ENCODE measurements at regions of chr12 and their contacts with region 1.

Region 1: GRCh38 chr12:109844983-109845823 is 12.0 kb upstream of the TRPV4 start:
- DNase-seq: peak; percentile 85 to 87 (median 86)
- H3K4me3 ChIP-seq: peak overlapping the region in 5 of 7 experiments; percentile 29 to 50 (median 34)
- H3K27ac ChIP-seq: no peak overlapping the region
- H3K4me1 ChIP-seq: peaks cover 1 to 8% (median 4%) of the 10 kb centered on the region in 4 experiments
- H3K27me3 ChIP-seq: no peaks in the 10 kb centered on the region

Region 2: DNA sequence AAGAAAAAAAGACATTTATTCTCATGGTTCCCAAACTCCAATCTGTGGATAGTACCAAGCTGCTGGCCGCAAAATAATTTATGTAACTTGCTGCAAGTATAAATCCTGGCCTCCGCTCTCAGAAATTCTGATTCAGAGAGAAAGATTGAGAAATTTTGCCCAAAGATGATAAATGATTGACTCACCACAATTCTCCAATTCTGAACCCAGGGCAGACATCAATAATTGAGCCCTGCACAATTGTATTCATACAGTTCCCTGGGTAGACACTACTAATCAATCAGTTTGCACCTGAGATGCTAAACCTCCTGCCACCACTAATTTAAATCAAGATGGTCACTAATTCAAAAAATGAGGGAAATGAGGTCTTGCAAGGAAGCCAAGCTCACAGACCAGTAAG is 50.2 kb before region 1 on chr12:
- CTCF ChIA-PET with region 1: no interaction called
- POLR2A ChIA-PET with region 1: no interaction called
- DNase-seq: no peak
- H3K4me3 ChIP-seq: no peak overlapping the region
- H3K27ac ChIP-seq: no peak overlapping the region
- H3K4me1 ChIP-seq: peaks cover 0 to 12% (median 7%) of the 10 kb centered on the region in 4 experiments
- H3K27me3 ChIP-seq: peaks cover 0 to 3% (median 0%) of the 10 kb centered on the region in 5 experiments

Region 3: DNA sequence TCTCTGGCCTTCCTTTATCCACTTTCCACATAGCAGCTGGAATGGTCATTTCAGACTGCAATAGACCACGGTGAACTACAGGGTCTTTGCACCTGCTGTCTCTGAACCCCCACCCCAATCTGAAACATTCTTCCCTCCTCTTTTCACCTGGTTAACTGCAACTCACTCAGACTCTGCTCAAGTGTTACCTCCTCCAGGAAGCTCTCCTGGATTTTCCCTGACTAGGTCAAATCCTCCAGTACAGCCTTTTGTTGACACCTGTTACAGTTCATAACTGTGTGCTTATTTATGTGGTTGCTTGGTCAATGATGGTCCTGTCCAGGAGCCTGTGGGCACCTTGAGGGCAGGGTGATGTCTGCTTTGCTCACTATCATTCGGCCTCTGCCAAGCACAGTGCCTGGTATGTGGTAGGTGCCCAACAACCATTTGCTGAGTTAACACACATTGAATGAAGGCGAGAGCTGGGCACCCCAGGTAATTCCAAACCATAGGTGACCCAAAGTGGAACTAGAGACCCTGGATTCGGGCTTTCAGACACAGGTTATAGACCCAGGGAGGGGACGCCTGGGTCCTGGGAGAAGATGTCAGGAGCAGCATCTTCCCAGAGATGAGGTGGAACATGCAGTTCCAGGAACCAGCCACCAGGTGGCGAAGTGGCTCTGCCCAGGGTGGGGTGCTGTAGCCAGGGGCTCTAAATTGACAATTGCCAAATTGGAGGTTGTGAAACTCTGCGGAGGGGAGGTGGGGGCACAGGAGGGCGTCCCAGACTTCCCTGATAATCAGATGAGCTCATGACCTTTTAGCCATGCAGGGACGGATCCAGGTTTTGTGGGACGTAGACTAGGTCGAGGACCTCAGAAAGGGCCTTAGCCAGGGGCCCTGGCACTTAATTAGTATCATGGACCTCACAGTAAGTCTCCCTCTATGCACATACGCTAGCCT is 40.1 kb before region 1 on chr12:
- CTCF ChIA-PET with region 1: interaction called, 57 read pairs
- POLR2A ChIA-PET with region 1: interaction called, 3 read pairs
- DNase-seq: peak; percentile 40 to 64 (median 51)
- H3K4me3 ChIP-seq: no peak overlapping the region
- H3K27ac ChIP-seq: no peak overlapping the region
- H3K4me1 ChIP-seq: no peaks in the 10 kb centered on the region
- H3K27me3 ChIP-seq: peaks cover 0 to 2% (median 0%) of the 10 kb centered on the region in 5 experiments

Region 4: DNA sequence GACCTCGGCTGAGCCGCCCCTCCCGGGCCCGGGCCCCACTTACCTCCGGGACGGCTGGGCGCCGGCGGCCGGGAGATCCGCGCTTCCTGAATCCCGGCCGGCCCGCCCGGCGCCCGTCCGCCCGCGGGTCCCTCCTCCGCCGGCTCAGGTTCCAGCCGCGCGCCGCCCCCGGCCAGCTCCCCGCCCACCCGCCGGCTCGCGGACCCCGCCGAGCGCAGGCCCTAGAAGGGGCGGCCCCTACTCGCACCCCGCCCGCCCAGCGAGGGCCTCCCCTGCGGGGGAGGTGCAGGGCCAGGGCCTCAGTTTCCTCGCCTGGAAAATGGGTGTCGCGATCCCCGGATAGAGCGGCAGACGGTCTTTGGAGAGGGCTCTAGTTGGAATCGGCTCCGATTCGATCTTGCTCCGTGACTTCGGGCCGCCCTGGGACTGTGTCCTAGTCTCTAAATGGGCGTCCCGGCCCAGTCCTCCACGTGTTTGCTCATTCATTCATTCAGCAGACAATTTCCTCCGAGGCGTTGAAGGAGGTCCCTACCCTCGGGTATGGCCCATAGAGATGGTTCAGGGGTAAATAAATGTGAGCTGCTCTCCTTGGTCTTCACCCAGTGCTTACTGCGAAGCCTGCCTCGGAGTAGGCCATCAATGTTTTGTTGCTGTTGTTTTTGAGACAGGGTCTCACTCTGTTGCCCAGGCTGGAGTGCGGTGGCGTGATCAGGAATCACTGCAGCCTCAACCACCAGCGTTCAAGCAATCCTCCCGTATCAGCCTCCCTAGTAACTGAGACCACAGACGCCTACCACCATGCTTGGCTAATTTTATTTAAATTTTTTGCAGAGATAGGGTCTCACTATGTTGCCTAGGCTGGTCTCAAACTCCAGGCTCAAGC is 11.7 kb before region 1 on chr12 and contains the start of gene TRPV4:
- CTCF ChIA-PET with region 1: interaction called, 34 read pairs
- POLR2A ChIA-PET with region 1: no interaction called
- DNase-seq: no peak
- H3K4me3 ChIP-seq: peak within 1 kb of the TSS in 1 of 7 experiments; percentile 40
- H3K27ac ChIP-seq: no peak within 1 kb of the TSS
- H3K4me1 ChIP-seq: peaks cover 0 to 5% (median 0%) of the 10 kb centered on the region in 4 experiments
- H3K27me3 ChIP-seq: peaks cover 2 to 49% (median 13%) of the 10 kb centered on the region in 5 experiments

Region 5: GRCh38 chr12:109858764-109859163 is 13.6 kb after region 1 on chr12:
- CTCF ChIA-PET with region 1: interaction called, 14 read pairs
- POLR2A ChIA-PET with region 1: interaction called, 3 read pairs
- DNase-seq: peak in 1 of 3 donors; percentile 15
- H3K4me3 ChIP-seq: no peak overlapping the region
- H3K27ac ChIP-seq: no peak overlapping the region
- H3K4me1 ChIP-seq: no peaks in the 10 kb centered on the region
- H3K27me3 ChIP-seq: no peaks in the 10 kb centered on the region

Region 6: GRCh38 chr12:109927622-109928021 is 82.4 kb after region 1 on chr12:
- CTCF ChIA-PET with region 1: interaction called, 12 read pairs
- POLR2A ChIA-PET with region 1: no interaction called
- DNase-seq: peak; percentile 19 to 52 (median 43)
- H3K4me3 ChIP-seq: no peak overlapping the region
- H3K27ac ChIP-seq: no peak overlapping the region
- H3K4me1 ChIP-seq: no peaks in the 10 kb centered on the region
- H3K27me3 ChIP-seq: no peaks in the 10 kb centered on the region